B cell (primary cell): ENCODE measurements at regions of chr20 and their contacts with region 1.

Region 1: DNA sequence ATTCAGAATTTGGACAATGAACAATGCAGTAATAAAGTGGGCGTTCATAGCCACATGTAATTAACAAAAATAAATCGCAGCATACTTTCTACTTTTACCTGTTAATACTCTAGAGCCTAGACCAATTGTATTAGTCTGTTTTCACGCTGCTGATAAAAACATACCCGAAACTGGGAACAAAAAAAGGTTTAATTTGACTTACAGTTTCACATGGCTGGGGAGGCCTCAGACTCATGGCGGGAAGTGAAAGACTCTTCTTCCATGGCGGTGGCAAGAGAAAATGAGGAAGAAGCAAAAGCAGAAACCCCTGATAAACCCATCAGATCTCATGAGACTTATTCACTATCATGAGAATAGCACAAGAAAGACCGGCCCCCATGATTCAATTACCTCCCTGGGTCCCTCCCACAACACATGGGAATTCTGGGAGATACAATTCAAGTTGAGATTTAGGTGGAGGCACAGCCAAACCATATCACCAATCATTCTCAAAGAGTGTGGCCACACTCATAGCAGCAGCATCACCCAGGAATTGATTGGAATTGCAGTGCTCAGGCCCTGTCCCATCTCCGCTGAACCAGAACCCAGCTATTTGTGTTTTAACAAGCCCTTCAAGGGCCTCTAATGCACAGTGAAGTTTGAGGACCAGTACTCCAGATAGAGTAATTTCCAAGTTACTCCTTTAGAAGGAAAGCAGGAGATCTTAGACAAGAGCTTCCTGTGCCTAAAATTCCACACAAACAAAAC is 650.0 kb downstream of the KIF16B start:
- DNase-seq: peak; percentile 83
- ATAC-seq: peak; percentile 70
- H3K4me3 ChIP-seq: peak overlapping the region; percentile 9 to 55 (median 28)
- H3K4me3 Mint-ChIP-seq: peak overlapping the region; percentile 40
- H3K27ac ChIP-seq: peak overlapping the region; percentile 71 to 88
- H3K27ac Mint-ChIP-seq: peak overlapping the region; percentile 84
- H3K4me1 ChIP-seq: peaks cover 59 to 63% of the 10 kb centered on the region in 2 donors
- H3K4me1 Mint-ChIP-seq: peaks cover 61% of the 10 kb centered on the region
- H3K27me3 ChIP-seq: no peaks in the 10 kb centered on the region
- H3K27me3 Mint-ChIP-seq: no peaks in the 10 kb centered on the region
- CTCF ChIP-seq: no peak

Region 2: GRCh38 chr20:15491575-15491974 is 431.6 kb before region 1 on chr20:
- CTCF ChIA-PET with region 1: no interaction called
- POLR2A ChIA-PET with region 1: no interaction called
- intact Hi-C with region 1: no loop called
- DNase-seq: peak; percentile 13
- ATAC-seq: no peak
- H3K4me3 ChIP-seq: no peak overlapping the region
- H3K4me3 Mint-ChIP-seq: no peak overlapping the region
- H3K27ac ChIP-seq: no peak overlapping the region
- H3K27ac Mint-ChIP-seq: no peak overlapping the region
- H3K4me1 ChIP-seq: no peaks in the 10 kb centered on the region
- H3K4me1 Mint-ChIP-seq: no peaks in the 10 kb centered on the region
- H3K27me3 ChIP-seq: no peaks in the 10 kb centered on the region
- H3K27me3 Mint-ChIP-seq: no peaks in the 10 kb centered on the region
- CTCF ChIP-seq: peak; percentile 13

Region 3: GRCh38 chr20:15799869-15800268 is 123.3 kb before region 1 on chr20:
- CTCF ChIA-PET with region 1: no interaction called
- POLR2A ChIA-PET with region 1: no interaction called
- intact Hi-C with region 1: loop called (anchors 10 kb)
- DNase-seq: no peak
- ATAC-seq: no peak
- H3K4me3 ChIP-seq: no peak overlapping the region
- H3K4me3 Mint-ChIP-seq: no peak overlapping the region
- H3K27ac ChIP-seq: no peak overlapping the region
- H3K27ac Mint-ChIP-seq: no peak overlapping the region
- H3K4me1 ChIP-seq: no peaks in the 10 kb centered on the region
- H3K4me1 Mint-ChIP-seq: no peaks in the 10 kb centered on the region
- H3K27me3 ChIP-seq: no peaks in the 10 kb centered on the region
- H3K27me3 Mint-ChIP-seq: no peaks in the 10 kb centered on the region
- CTCF ChIP-seq: no peak

Region 4: GRCh38 chr20:15857173-15857784 is 65.9 kb before region 1 on chr20:
- CTCF ChIA-PET with region 1: interaction called, 5 read pairs
- POLR2A ChIA-PET with region 1: no interaction called
- intact Hi-C with region 1: loop called (anchors 5 kb)
- DNase-seq: peak; percentile 58
- ATAC-seq: peak; percentile 73
- H3K4me3 ChIP-seq: no peak overlapping the region
- H3K4me3 Mint-ChIP-seq: peak overlapping the region; percentile 42
- H3K27ac ChIP-seq: peak overlapping the region; percentile 20 to 53
- H3K27ac Mint-ChIP-seq: peak overlapping the region; percentile 46
- H3K4me1 ChIP-seq: peaks cover 30 to 42% of the 10 kb centered on the region in 2 donors
- H3K4me1 Mint-ChIP-seq: peaks cover 62% of the 10 kb centered on the region
- H3K27me3 ChIP-seq: no peaks in the 10 kb centered on the region
- H3K27me3 Mint-ChIP-seq: no peaks in the 10 kb centered on the region
- CTCF ChIP-seq: no peak

Region 5: DNA sequence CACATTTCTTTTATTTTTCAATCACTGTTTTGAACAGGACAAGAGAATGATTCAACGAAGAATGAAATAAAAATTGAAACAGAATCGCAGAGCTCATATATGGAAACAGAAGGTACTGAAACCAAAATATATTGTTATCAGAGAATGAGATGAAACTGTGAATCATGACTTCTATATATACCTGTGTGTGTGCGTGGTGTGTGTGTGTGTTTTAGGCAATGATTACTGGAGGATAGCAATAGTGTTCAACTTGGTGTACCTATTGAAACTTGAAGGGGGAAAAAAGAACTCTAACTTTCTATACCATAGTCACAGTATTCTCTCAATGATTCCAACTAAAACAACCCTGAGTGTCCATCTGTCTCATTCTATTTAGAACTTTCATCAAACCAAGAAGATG is 63.5 kb after region 1 on chr20:
- CTCF ChIA-PET with region 1: no interaction called
- POLR2A ChIA-PET with region 1: no interaction called
- intact Hi-C with region 1: loop called (anchors 5 kb)
- DNase-seq: peak; percentile 31
- ATAC-seq: peak; percentile 80
- H3K4me3 ChIP-seq: peak overlapping the region in 3 of 5 experiments; percentile 33 to 65 (median 35)
- H3K4me3 Mint-ChIP-seq: peak overlapping the region; percentile 82
- H3K27ac ChIP-seq: peak overlapping the region; percentile 63 to 73
- H3K27ac Mint-ChIP-seq: peak overlapping the region; percentile 92
- H3K4me1 ChIP-seq: peaks cover 21 to 22% of the 10 kb centered on the region in 2 donors
- H3K4me1 Mint-ChIP-seq: peaks cover 31% of the 10 kb centered on the region
- H3K27me3 ChIP-seq: no peaks in the 10 kb centered on the region
- H3K27me3 Mint-ChIP-seq: no peaks in the 10 kb centered on the region
- CTCF ChIP-seq: no peak

Region 6: DNA sequence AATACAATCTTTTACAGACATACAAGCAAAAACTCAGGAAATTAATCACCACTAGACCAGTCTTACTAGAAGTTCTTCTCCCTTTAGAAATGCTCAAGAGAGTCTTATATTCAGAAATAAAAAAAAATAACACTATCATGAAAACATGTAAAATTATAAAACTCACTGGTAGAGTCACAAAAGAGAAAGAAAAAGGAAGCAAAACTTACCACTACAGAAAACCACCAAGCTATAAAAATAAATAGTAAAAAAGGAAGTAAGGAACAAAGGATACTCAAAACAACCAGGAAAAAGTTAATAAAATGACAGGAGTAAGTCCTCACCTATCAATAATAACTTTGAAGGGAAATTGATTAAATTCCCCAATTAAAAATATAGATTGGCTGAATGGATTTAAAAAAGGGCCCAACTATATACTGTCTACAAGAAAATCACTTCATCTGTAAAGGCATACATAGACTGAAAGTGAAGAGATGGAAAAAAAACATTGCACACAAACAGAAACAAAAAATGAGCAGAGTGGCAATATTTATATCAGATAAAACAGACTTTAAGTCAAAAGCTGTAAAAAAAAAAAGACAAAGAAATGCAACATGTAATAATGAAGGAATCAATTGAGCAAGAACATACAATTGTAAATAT is 160.6 kb after region 1 on chr20:
- CTCF ChIA-PET with region 1: no interaction called
- POLR2A ChIA-PET with region 1: no interaction called
- intact Hi-C with region 1: loop called (anchors 5 kb)
- DNase-seq: peak; percentile 24
- ATAC-seq: peak; percentile 17
- H3K4me3 ChIP-seq: peak overlapping the region in 2 of 5 experiments; percentile 16 to 25
- H3K4me3 Mint-ChIP-seq: peak overlapping the region; percentile 10
- H3K27ac ChIP-seq: peak overlapping the region; percentile 9 to 71
- H3K27ac Mint-ChIP-seq: peak overlapping the region; percentile 47
- H3K4me1 ChIP-seq: peaks cover 37 to 59% of the 10 kb centered on the region in 2 donors
- H3K4me1 Mint-ChIP-seq: peaks cover 48% of the 10 kb centered on the region
- H3K27me3 ChIP-seq: no peaks in the 10 kb centered on the region
- H3K27me3 Mint-ChIP-seq: no peaks in the 10 kb centered on the region
- CTCF ChIP-seq: no peak